PC-9 (cell line): ENCODE measurements at regions of chr3 and their contacts with region 1.

Region 1: DNA sequence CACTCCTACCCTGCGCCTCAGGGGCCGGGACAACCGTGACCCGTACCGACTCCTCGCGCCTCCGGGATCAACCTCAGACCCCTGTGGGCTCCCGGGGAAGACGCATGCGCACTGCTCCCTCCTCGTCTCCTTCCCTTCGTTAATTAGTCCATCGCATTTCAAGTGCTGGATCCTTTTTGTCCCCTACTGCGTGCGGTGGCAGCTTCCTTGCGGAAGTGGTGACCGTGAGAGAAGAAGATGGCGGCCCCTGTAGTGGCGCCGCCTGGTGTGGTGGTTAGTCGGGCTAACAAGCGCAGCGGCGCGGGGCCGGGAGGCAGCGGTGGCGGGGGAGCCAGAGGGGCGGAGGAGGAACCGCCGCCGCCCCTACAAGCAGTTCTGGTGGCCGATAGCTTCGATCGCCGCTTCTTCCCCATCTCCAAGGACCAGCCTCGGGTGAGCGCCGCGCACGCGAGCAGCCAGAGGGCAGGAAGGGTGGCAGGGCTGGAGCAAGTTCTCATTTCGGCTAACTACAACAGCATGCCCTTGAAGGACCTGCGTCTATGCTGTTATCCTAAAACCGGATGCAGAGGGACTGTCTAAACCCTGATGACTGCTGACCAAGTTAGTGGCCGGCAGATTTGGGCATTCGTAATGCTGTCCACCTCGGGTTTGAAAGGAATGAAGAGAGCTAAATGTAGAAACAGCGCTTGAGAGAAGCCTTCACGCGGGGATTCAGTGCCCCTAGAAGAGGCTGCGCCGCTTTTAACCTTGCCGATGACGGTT is at the start of gene EIF2B5:
- DNase-seq: peak; percentile 87 to 88
- H3K4me3 ChIP-seq: peak within 1 kb of the TSS; percentile 80
- H3K27ac ChIP-seq: peak within 1 kb of the TSS; percentile 79
- H3K4me1 ChIP-seq: peaks cover 25% of the 10 kb centered on the region
- H3K27me3 ChIP-seq: no peaks in the 10 kb centered on the region
- CTCF ChIP-seq: peak; percentile 48
- total RNA-seq, gene EIF2B5: 45.7 and 54.1 TPM in 2 replicates

Region 2: DNA sequence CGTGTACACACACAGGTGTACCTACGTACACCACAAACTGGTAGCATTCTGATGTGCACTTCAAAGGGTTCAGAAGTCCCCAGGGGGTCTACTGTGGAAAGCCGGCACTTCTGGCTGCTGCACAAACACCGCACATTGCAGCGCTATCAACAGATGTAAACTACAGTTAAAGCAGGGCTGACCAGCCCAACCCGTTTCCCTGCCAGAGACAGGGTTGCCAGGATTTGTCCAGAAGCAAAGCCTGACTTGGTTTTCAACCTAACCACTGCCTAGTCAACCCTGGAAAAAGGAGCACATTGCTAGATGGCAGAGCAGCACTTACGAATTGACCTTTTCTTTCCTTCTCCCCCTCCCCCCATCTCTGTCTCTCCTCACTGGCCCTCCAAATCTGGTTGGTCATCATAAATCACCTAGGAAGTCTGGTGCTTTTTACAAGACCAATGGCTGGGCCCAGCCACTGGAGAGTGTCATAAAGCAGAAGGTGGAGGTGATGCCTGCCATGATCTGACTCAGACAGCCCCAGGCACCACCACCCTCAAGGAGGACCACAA is 169.0 kb before region 1 on chr3:
- CTCF ChIA-PET with region 1: no interaction called
- POLR2A ChIA-PET with region 1: no interaction called
- intact Hi-C with region 1: loop called (anchors 1 kb)
- DNase-seq: peak; percentile 83 to 98
- H3K4me3 ChIP-seq: peak overlapping the region; percentile 27
- H3K27ac ChIP-seq: peak overlapping the region; percentile 99
- H3K4me1 ChIP-seq: peaks cover 72% of the 10 kb centered on the region
- H3K27me3 ChIP-seq: no peaks in the 10 kb centered on the region
- CTCF ChIP-seq: no peak

Region 3: GRCh38 chr3:184154885-184155643 is 19.7 kb after region 1 on chr3 and contains the start of gene DVL3:
- CTCF ChIA-PET with region 1: no interaction called
- POLR2A ChIA-PET with region 1: no interaction called
- intact Hi-C with region 1: loop called (anchors 1 kb)
- DNase-seq: peak in 1 of 2 experiments; percentile 84
- H3K4me3 ChIP-seq: peak within 1 kb of the TSS; percentile 97
- H3K27ac ChIP-seq: peak within 1 kb of the TSS; percentile 63
- H3K4me1 ChIP-seq: peaks cover 26% of the 10 kb centered on the region
- H3K27me3 ChIP-seq: no peaks in the 10 kb centered on the region
- CTCF ChIP-seq: no peak
- total RNA-seq, gene DVL3: 101 and 108 TPM in 2 replicates

Region 4: GRCh38 chr3:185623939-185624665 is 1488.8 kb after region 1 on chr3:
- CTCF ChIA-PET with region 1: no interaction called
- POLR2A ChIA-PET with region 1: interaction called, 11 read pairs
- intact Hi-C with region 1: no loop called
- DNase-seq: peak in 1 of 2 experiments; percentile 12
- H3K4me3 ChIP-seq: no peak overlapping the region
- H3K27ac ChIP-seq: no peak overlapping the region
- H3K4me1 ChIP-seq: no peaks in the 10 kb centered on the region
- H3K27me3 ChIP-seq: no peaks in the 10 kb centered on the region
- CTCF ChIP-seq: no peak